Dorsolateral prefrontal cortex (tissue), 120 donors: ENCODE measurements at regions of chr6 and their contacts with region 1.

Region 1: GRCh38 chr6:32885698-32886286 is 31.8 kb downstream of the PSMB9 start:
- DNase-seq: no peak
- H3K4me3 ChIP-seq: peak overlapping the region in 1 of 59 donors; percentile 1
- H3K27ac ChIP-seq: peak overlapping the region in 5 of 59 donors; percentile 10 to 63 (median 47)
- H3K27me3 ChIP-seq: no peaks in the 10 kb centered on the region
- CTCF ChIP-seq: peak; percentile 61 to 90 (median 79)

Region 2: GRCh38 chr6:32920715-32921114 is 34.9 kb after region 1 on chr6:
- intact Hi-C with region 1: loop called in 1 of 2 experiments (anchors 1 kb)
- DNase-seq: no peak
- H3K4me3 ChIP-seq: no peak overlapping the region
- H3K27ac ChIP-seq: no peak overlapping the region
- H3K27me3 ChIP-seq: peaks cover 0 to 7% (median 0%) of the 10 kb centered on the region in 45 donors
- CTCF ChIP-seq: no peak

Region 3: DNA sequence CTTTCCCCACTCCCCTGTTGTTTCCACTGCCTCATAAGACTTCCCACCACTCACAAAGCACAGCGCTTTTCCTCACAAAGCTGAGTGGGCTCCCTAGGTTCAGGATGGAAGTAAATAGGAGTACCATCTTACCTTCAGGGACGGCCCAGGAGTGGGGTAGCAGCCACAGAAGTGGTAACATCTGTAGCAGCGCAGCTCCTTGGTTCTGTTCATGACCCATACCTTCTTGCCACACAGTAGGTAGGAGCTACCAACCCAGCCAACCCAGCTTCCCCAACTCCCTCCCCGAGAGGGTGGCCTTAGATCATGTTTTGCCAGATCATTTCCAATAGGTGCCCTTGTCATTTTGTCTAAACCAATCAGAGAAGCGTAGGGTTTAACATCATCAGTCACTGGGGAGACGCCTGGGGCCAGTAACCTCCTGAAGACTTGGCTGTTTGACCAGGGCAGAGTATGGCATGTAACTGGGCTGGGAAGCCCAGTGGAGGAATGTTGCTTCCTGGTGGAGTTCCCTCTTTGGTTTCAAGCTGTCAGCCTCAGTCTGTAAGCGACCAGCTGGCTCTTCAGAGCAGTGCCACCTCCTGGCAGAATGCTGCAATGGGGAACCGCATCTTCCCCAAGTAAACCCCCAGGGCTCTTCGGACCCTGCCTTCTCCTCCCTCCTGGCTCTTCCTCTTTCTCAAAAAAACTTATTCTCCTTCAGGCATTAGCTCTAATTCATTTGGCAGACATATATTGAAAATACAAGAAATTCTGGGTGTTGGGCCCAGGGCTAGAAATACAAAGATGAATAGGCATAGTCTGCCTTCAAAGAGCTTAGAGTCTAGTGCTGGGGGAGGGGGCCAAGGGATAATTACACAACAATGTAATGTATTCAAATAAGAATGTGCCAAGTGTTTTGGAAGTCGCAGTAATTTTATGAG is 67.3 kb after region 1 on chr6 and contains the start of gene HLA-DMA:
- intact Hi-C with region 1: loop called in 1 of 2 experiments (anchors 5 kb)
- DNase-seq: peak; percentile 38 to 75 (median 62)
- H3K4me3 ChIP-seq: peak within 1 kb of the TSS in 53 of 59 donors; percentile 1 to 57 (median 42)
- H3K27ac ChIP-seq: peak within 1 kb of the TSS in 34 of 59 donors; percentile 5 to 73 (median 40)
- H3K27me3 ChIP-seq: no peaks in the 10 kb centered on the region
- CTCF ChIP-seq: peak; percentile 41 to 89 (median 76)
- total RNA-seq, gene HLA-DMA: 5.0 to 44.2 (median 15.1) TPM

Region 4: DNA sequence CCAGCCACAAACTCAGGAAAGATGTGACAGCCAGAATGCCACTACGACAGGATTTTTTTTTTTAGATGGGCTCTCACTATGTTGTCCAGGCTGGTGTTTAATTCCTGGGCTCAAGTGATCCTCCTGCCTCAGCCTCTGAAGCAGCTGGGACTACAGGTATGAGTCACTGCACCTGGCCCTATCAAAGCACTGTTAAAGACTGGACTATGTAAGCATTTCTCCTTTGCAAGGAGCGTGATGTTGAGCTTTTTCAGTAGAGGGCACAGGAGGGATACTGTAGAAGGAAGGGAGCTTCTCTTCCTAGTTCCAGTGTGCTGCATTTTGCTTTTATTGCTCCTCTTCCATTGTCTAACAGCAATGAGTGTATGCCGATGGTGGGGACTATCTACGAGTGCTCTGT is 604.4 kb after region 1 on chr6:
- intact Hi-C with region 1: no loop called
- DNase-seq: no peak
- H3K4me3 ChIP-seq: no peak overlapping the region
- H3K27ac ChIP-seq: no peak overlapping the region
- H3K27me3 ChIP-seq: peaks cover 0 to 8% (median 0%) of the 10 kb centered on the region in 45 donors
- CTCF ChIP-seq: no peak